ENCODE measurements at regions of chr1 and their contacts with region 1.

Region 1: DNA sequence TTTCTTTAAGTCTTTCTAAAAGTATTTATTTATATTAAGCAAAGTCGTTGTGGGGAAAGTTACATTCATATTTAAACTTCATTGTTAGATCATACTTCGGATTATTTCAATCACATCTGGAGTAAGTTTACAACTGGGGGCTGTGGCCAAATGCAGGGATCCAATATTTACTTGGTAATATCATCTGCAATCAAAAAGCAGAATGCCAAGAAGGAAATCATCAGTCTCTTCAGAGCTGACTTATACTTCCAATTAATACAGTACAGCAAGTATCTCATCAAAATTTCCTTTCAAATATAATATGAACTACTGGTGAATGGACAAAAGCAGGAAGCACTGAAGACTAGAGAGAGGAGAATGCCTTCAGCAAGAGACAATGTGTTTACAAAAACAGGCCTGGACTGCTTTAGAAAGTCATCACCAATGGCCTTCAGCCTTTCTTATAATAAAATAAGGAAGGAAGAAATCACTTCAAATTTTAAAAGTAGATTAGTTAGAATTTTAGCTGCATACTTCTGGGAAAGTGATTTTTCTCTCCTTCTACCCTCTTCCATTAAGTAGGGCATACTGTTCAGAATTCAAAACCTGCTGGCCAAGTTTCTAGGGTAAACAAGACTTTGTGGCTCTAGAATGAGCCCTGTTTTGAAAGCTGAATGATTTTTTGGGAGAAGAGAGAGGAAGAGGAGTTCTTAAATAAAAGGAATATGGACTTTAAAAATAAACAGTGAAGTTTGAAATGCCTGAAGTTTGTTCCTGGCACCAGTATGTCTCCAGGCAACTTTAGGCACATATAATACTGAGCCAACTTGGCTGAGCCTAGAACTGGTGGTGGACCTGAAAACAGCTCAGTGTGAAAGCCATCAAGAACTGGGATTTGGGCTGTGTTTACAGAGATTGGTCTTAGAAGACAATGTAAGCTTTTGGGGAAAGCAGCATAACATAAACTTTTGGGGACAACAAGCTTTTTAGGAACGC is 22.2 kb upstream of the MYOC start:
- DNase-seq: no peak
- ATAC-seq: no peak
- H3K4me3 ChIP-seq: no peak overlapping the region
- H3K27ac ChIP-seq: no peak overlapping the region
- H3K4me1 ChIP-seq: peaks cover 8% of the 10 kb centered on the region
- H3K27me3 ChIP-seq: no peaks in the 10 kb centered on the region
- CTCF ChIP-seq: no peak

Region 2: GRCh38 chr1:171654942-171655745 is 19.6 kb before region 1 on chr1:
- intact Hi-C with region 1: loop called in 1 of 2 experiments (anchors 1 kb)
- DNase-seq: peak; percentile 79 to 90
- ATAC-seq: peak; percentile 58 to 78 (median 72)
- H3K4me3 ChIP-seq: peak overlapping the region; percentile 25
- H3K27ac ChIP-seq: peak overlapping the region; percentile 74
- H3K4me1 ChIP-seq: peaks cover 25% of the 10 kb centered on the region
- H3K27me3 ChIP-seq: no peaks in the 10 kb centered on the region
- CTCF ChIP-seq: peak; percentile 52

Region 3: GRCh38 chr1:171988243-171988885 is 313.6 kb after region 1 on chr1:
- intact Hi-C with region 1: no loop called
- DNase-seq: no peak
- ATAC-seq: no peak
- H3K4me3 ChIP-seq: no peak overlapping the region
- H3K27ac ChIP-seq: no peak overlapping the region
- H3K4me1 ChIP-seq: peaks cover 6% of the 10 kb centered on the region
- H3K27me3 ChIP-seq: no peaks in the 10 kb centered on the region
- CTCF ChIP-seq: no peak